Common myeloid progenitor, CD34-positive (primary cell): ENCODE measurements at regions of chr3 and their contacts with region 1.

Region 1: DNA sequence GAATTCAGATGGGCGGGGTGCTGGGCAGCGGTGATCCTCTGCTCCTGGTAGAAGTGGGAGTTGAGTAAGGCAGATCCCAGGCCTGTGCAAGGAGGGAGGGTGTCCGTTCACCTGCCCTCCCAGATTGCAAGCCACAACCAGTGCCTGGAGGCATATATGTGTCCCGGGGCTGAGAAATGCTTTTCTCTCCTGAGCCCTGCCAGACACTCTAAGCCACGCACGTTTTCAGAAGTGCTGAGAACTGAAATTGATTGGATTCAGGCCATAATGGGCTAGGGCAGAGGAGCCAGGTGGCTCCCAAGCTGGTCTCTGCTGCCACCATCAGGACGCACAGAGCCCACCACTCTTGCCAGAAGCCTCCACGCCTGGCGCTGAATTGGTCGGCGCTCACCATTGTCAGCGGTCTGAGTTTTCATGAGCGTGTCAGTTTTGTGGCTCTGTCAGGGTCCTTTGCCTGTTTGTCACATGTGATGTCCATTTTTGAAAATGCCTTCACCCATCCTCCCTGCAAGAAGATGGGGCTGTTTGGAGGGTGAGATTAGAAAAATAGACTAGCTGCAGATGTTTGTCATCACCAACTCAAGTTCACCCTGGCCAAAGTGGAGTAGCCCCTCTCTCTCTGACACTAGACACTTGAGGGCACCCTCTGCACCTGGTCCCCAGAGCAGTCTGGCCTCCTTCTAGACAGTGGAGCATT is 15.4 kb upstream of the BFSP2 start:
- DNase-seq: peak; percentile 64 to 80 (median 77)
- H3K4me3 ChIP-seq: no peak overlapping the region
- H3K27ac ChIP-seq: no peak overlapping the region
- H3K4me1 ChIP-seq: peaks cover 0 to 4% (median 0%) of the 10 kb centered on the region in 4 experiments
- H3K27me3 ChIP-seq: peaks cover 0 to 6% (median 0%) of the 10 kb centered on the region in 5 experiments

Region 2: GRCh38 chr3:132730891-132731580 is 653.4 kb before region 1 on chr3:
- CTCF ChIA-PET with region 1: interaction called, 55 read pairs
- POLR2A ChIA-PET with region 1: no interaction called
- DNase-seq: peak; percentile 49 to 66 (median 52)
- H3K4me3 ChIP-seq: no peak overlapping the region
- H3K27ac ChIP-seq: no peak overlapping the region
- H3K4me1 ChIP-seq: no peaks in the 10 kb centered on the region
- H3K27me3 ChIP-seq: peaks cover 0 to 2% (median 0%) of the 10 kb centered on the region in 5 experiments

Region 3: GRCh38 chr3:133040696-133041523 is 343.6 kb before region 1 on chr3:
- CTCF ChIA-PET with region 1: interaction called, 38 read pairs
- POLR2A ChIA-PET with region 1: no interaction called
- DNase-seq: peak; percentile 52 to 74 (median 66)
- H3K4me3 ChIP-seq: no peak overlapping the region
- H3K27ac ChIP-seq: no peak overlapping the region
- H3K4me1 ChIP-seq: peaks cover 0 to 16% (median 12%) of the 10 kb centered on the region in 4 experiments
- H3K27me3 ChIP-seq: peaks cover 9 to 52% (median 30%) of the 10 kb centered on the region in 5 experiments

Region 4: DNA sequence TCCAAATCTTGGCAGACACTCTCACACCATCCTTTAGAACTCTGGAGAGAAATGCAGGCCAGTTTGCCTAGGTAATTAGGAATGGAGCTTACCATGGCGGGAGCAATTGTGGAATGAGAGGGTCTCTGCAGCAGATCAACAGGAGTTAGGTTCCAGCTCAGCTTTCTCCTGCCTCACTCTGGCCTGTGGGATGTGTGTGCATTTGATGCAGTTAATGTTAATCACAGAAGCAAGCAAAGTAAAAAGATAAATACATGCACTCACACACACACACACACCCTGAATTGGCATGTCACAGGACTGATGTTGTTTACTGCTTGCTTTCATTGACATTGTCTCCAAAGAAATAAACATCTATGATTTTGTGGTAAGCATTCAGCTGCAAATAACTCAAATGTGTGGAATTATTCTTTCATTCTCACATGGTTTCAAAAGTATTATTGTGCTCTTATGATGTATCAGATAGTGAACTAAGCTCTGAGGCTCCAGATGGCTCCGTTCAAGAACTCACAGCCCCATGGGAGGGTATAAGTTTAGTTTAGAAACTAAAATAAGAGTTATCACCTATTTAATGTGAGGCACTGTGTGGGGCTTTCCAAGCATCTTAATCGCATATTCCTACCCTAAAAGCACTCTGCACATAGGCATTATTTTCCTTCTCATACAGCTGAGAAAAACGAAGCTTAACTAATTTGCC is 16.0 kb before region 1 on chr3:
- CTCF ChIA-PET with region 1: interaction called, 42 read pairs
- POLR2A ChIA-PET with region 1: no interaction called
- DNase-seq: no peak
- H3K4me3 ChIP-seq: no peak overlapping the region
- H3K27ac ChIP-seq: no peak overlapping the region
- H3K4me1 ChIP-seq: peaks cover 0 to 5% (median 2%) of the 10 kb centered on the region in 4 experiments
- H3K27me3 ChIP-seq: peaks cover 0 to 8% (median 0%) of the 10 kb centered on the region in 5 experiments

Region 5: GRCh38 chr3:133419151-133419909 is 34.9 kb after region 1 on chr3:
- CTCF ChIA-PET with region 1: interaction called, 12 read pairs
- POLR2A ChIA-PET with region 1: no interaction called
- DNase-seq: no peak
- H3K4me3 ChIP-seq: no peak overlapping the region
- H3K27ac ChIP-seq: no peak overlapping the region
- H3K4me1 ChIP-seq: peaks cover 0 to 1% (median 0%) of the 10 kb centered on the region in 4 experiments
- H3K27me3 ChIP-seq: peaks cover 0 to 5% (median 0%) of the 10 kb centered on the region in 5 experiments